CD14-positive monocyte (primary cell): ENCODE measurements at regions of chr11 and their contacts with region 1.

Region 1: GRCh38 chr11:19951558-19952115 is 208.6 kb downstream of the DBX1 start:
- DNase-seq: peak; percentile 12 to 43 (median 15)
- H3K4me3 ChIP-seq: peak overlapping the region; percentile 22 to 72 (median 70)
- H3K4me3 Mint-ChIP-seq: peak overlapping the region; percentile 64 to 91
- H3K27ac ChIP-seq: no peak overlapping the region
- H3K27ac Mint-ChIP-seq: no peak overlapping the region
- H3K4me1 ChIP-seq: no peaks in the 10 kb centered on the region
- H3K4me1 Mint-ChIP-seq: peaks cover 5% of the 10 kb centered on the region
- H3K27me3 ChIP-seq: no peaks in the 10 kb centered on the region
- H3K27me3 Mint-ChIP-seq: no peaks in the 10 kb centered on the region
- CTCF ChIP-seq: peak; percentile 73

Region 2: DNA sequence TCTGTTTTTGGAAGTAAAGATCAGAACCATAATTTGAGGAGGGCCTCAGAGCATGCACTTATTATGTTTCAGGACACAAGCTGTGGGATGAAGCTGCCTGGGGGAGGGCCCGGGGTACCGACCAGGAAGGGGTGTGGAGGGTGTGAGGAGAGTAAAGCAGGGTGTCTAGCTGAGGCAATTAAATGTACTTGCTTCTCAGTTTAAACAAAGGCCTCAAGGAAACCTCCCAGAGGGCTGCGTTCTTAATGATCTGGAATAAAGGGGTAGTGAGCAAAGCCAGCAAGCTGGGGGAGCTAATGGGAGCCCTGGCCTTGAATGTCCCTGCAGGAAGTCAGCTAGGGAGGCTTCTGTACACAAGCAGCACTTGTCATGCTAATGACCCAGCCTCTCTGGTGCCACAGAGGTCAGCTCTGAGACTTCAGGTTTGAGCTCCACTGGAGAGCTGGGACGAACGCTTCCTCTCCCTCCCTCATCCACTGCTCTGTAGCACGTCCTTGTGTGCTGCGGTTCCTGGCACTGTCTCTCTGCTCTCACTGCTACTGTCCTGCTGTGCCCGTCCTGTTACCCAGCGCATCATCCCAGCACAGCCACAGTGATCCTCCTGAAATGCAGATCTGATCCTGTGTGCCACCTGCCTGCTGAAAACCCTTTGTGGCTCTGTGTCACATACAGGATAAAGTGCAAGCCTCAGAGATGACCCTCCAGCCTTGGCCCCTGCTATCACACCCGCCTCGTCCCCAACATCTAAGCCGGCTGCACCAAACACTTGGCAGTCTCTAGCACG is 48.9 kb after region 1 on chr11:
- intact Hi-C with region 1: loop called in 1 of 2 experiments (anchors 10 kb)
- DNase-seq: no peak
- H3K4me3 ChIP-seq: no peak overlapping the region
- H3K4me3 Mint-ChIP-seq: no peak overlapping the region
- H3K27ac ChIP-seq: no peak overlapping the region
- H3K27ac Mint-ChIP-seq: no peak overlapping the region
- H3K4me1 ChIP-seq: no peaks in the 10 kb centered on the region
- H3K4me1 Mint-ChIP-seq: no peaks in the 10 kb centered on the region
- H3K27me3 ChIP-seq: no peaks in the 10 kb centered on the region
- H3K27me3 Mint-ChIP-seq: peaks cover 0 to 3% (median 2%) of the 10 kb centered on the region in 3 donors
- CTCF ChIP-seq: no peak

Region 3: GRCh38 chr11:20131788-20132666 is 180.4 kb after region 1 on chr11:
- intact Hi-C with region 1: loop called (anchors 5 to 10 kb)
- DNase-seq: peak; percentile 12 to 37 (median 20)
- H3K4me3 ChIP-seq: peak overlapping the region in 1 of 3 experiments; percentile 52
- H3K4me3 Mint-ChIP-seq: peak overlapping the region; percentile 66 to 78
- H3K27ac ChIP-seq: no peak overlapping the region
- H3K27ac Mint-ChIP-seq: peak overlapping the region in 1 of 7 donors; percentile 31
- H3K4me1 ChIP-seq: peaks cover 8 to 9% of the 10 kb centered on the region in 2 donors
- H3K4me1 Mint-ChIP-seq: peaks cover 12% of the 10 kb centered on the region
- H3K27me3 ChIP-seq: peaks cover 0 to 24% of the 10 kb centered on the region in 2 donors
- H3K27me3 Mint-ChIP-seq: peaks cover 23 to 31% (median 28%) of the 10 kb centered on the region in 3 donors
- CTCF ChIP-seq: peak; percentile 92